Heart right ventricle (tissue), 16 donors: ENCODE measurements at regions of chr16 and their contacts with region 1.

Region 1: GRCh38 chr16:69396187-69397061 is 10.6 kb upstream of the TERF2 start:
- DNase-seq: peak in 1 of 2 donors; percentile 84
- ATAC-seq: peak in 7 of 8 donors; percentile 40 to 66 (median 45)
- H3K4me3 ChIP-seq: no peak overlapping the region
- H3K27ac ChIP-seq: peak overlapping the region in 9 of 10 donors; percentile 57 to 82 (median 77)
- H3K4me1 ChIP-seq: peaks cover 7 to 46% (median 26%) of the 10 kb centered on the region in 9 donors
- H3K27me3 ChIP-seq: no peaks in the 10 kb centered on the region
- CTCF ChIP-seq: peak in 7 of 9 donors; percentile 65 to 82 (median 74)

Region 2: DNA sequence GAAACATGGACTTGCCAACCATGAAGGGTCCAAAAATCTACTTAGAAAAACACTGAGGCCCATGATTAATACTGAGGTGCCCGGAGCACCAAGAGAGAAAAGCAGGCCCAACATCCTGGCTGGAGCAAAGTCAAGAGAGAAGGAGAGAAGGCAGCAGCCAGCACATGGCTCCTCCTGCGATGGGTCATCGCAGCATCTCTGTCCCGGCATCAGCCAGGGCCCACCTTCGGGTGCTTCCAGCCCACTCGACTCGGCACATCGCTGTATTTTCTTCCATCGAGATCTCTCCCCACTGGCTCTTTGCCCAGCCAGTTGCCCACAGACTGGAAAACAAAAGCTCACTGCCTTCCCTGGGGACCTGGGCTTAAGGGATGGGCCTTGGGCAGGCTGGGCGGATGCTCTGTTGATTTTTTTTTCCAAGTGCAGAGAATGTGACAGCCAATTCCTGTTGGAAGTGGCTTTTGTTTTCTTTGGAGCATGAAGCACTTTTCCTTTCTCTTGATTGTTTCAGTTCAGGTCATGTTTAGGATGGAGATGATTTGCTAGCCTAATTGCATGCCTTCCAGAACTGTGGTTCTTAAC is 86.1 kb after region 1 on chr16:
- intact Hi-C with region 1: loop called in 2 of 10 experiments (anchors 2 to 10 kb)
- DNase-seq: peak; percentile 66 to 85
- ATAC-seq: peak; percentile 80 to 95 (median 87)
- H3K4me3 ChIP-seq: peak overlapping the region in 7 of 10 donors; percentile 17 to 45 (median 32)
- H3K27ac ChIP-seq: peak overlapping the region; percentile 14 to 94 (median 85)
- H3K4me1 ChIP-seq: peaks cover 2 to 33% (median 24%) of the 10 kb centered on the region in 9 donors
- H3K27me3 ChIP-seq: peaks cover 0 to 58% (median 0%) of the 10 kb centered on the region in 7 donors
- CTCF ChIP-seq: peak in 1 of 9 donors; percentile 0

Region 3: GRCh38 chr16:69618307-69618706 is 221.9 kb after region 1 on chr16:
- intact Hi-C with region 1: loop called in 1 of 10 experiments (anchors 5 kb)
- DNase-seq: peak in 1 of 2 donors; percentile 27
- ATAC-seq: peak in 7 of 8 donors; percentile 55 to 81 (median 73)
- H3K4me3 ChIP-seq: no peak overlapping the region
- H3K27ac ChIP-seq: peak overlapping the region in 8 of 10 donors; percentile 18 to 62 (median 54)
- H3K4me1 ChIP-seq: peaks cover 5 to 79% (median 58%) of the 10 kb centered on the region in 9 donors
- H3K27me3 ChIP-seq: no peaks in the 10 kb centered on the region
- CTCF ChIP-seq: no peak

Region 4: GRCh38 chr16:69709456-69710084 is 313.1 kb after region 1 on chr16:
- intact Hi-C with region 1: loop called in 4 of 10 experiments (anchors 5 to 10 kb)
- DNase-seq: no peak
- ATAC-seq: peak in 6 of 8 donors; percentile 34 to 73 (median 56)
- H3K4me3 ChIP-seq: no peak overlapping the region
- H3K27ac ChIP-seq: peak overlapping the region in 4 of 10 donors; percentile 3 to 59 (median 34)
- H3K4me1 ChIP-seq: peaks cover 0 to 10% (median 5%) of the 10 kb centered on the region in 9 donors
- H3K27me3 ChIP-seq: no peaks in the 10 kb centered on the region
- CTCF ChIP-seq: peak; percentile 35 to 80 (median 71)